ENCODE measurements at regions of chr2 and their contacts with region 1.

Region 1: GRCh38 chr2:26088032-26088643 is 54.3 kb downstream of the RAB10 start:
- DNase-seq: peak; percentile 56
- ATAC-seq: no peak
- H3K4me3 ChIP-seq: no peak overlapping the region
- H3K27ac ChIP-seq: no peak overlapping the region
- H3K4me1 ChIP-seq: peaks cover 21% of the 10 kb centered on the region
- H3K27me3 ChIP-seq: no peaks in the 10 kb centered on the region
- CTCF ChIP-seq: peak; percentile 89

Region 2: GRCh38 chr2:25528173-25528572 is 560.0 kb before region 1 on chr2:
- CTCF ChIA-PET with region 1: no interaction called
- POLR2A ChIA-PET with region 1: no interaction called
- intact Hi-C with region 1: no loop called
- DNase-seq: peak; percentile 69
- ATAC-seq: peak; percentile 90
- H3K4me3 ChIP-seq: no peak overlapping the region
- H3K27ac ChIP-seq: no peak overlapping the region
- H3K4me1 ChIP-seq: peaks cover 15% of the 10 kb centered on the region
- H3K27me3 ChIP-seq: no peaks in the 10 kb centered on the region
- CTCF ChIP-seq: no peak

Region 3: GRCh38 chr2:25844089-25844488 is 244.0 kb before region 1 on chr2:
- CTCF ChIA-PET with region 1: no interaction called
- POLR2A ChIA-PET with region 1: no interaction called
- intact Hi-C with region 1: no loop called
- DNase-seq: peak; percentile 9
- ATAC-seq: no peak; the same call in 1 of the 2 replicates
- H3K4me3 ChIP-seq: no peak overlapping the region
- H3K27ac ChIP-seq: no peak overlapping the region
- H3K4me1 ChIP-seq: peaks cover 6% of the 10 kb centered on the region
- H3K27me3 ChIP-seq: no peaks in the 10 kb centered on the region
- CTCF ChIP-seq: no peak

Region 4: DNA sequence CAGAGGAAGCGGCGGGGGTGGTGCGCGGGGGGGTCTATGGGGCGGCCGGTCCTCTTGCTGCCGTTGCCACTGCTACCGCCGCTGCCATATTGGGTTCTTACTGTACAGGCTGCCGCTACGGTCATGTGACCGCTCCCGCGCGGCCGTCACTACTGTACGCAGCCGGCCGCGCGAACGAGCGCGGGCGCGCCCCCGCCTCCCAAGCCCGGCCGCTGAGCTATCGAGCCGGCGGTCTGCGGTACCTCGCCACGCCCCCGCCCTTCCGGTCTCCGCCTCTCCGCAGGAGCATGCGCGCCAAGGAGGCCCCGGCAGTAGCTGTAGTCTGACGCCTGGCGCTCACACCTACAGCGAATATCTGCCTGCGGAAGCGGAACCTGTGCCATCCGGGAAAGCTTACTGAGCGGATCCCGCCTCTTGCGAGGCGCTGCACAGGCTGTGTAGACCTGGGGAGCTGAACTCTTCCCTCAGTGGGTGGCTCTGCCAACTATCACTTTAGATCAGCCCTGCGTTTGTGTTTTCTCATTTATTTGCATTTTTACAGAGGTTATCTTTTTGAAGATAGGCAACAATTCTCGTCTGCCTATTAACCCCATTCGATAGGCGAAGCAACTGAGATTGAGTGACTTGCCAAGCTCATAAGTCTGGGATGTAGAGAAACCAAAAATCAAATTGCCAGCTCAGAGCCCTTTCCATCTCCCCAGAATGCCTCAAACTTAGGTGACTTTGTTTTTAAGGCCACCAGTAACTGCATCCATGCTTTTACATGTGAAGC is 209.6 kb before region 1 on chr2 and contains the start of gene ASXL2:
- CTCF ChIA-PET with region 1: no interaction called
- POLR2A ChIA-PET with region 1: no interaction called
- intact Hi-C with region 1: loop called (anchors 10 kb)
- DNase-seq: peak; percentile 98
- ATAC-seq: peak; percentile 85
- H3K4me3 ChIP-seq: peak within 1 kb of the TSS; percentile 94
- H3K27ac ChIP-seq: peak within 1 kb of the TSS; percentile 79
- H3K4me1 ChIP-seq: peaks cover 25% of the 10 kb centered on the region
- H3K27me3 ChIP-seq: no peaks in the 10 kb centered on the region
- CTCF ChIP-seq: no peak
- total RNA-seq, gene ASXL2: 11.5 and 18.7 TPM in 2 replicates

Region 5: GRCh38 chr2:25991965-25992364 is 96.2 kb before region 1 on chr2:
- CTCF ChIA-PET with region 1: interaction called, 4 read pairs
- POLR2A ChIA-PET with region 1: no interaction called
- intact Hi-C with region 1: loop called (anchors 2 kb)
- DNase-seq: no peak
- ATAC-seq: peak; percentile 35
- H3K4me3 ChIP-seq: peak overlapping the region; percentile 51; the same call in 1 of the 2 replicates
- H3K27ac ChIP-seq: no peak overlapping the region
- H3K4me1 ChIP-seq: peaks cover 6% of the 10 kb centered on the region
- H3K27me3 ChIP-seq: no peaks in the 10 kb centered on the region
- CTCF ChIP-seq: no peak

Region 6: GRCh38 chr2:26126074-26126473 is 37.9 kb after region 1 on chr2:
- CTCF ChIA-PET with region 1: no interaction called
- POLR2A ChIA-PET with region 1: interaction called, 4 read pairs
- intact Hi-C with region 1: loop called (anchors 5 kb)
- DNase-seq: no peak
- ATAC-seq: no peak
- H3K4me3 ChIP-seq: no peak overlapping the region
- H3K27ac ChIP-seq: no peak overlapping the region
- H3K4me1 ChIP-seq: no peaks in the 10 kb centered on the region
- H3K27me3 ChIP-seq: no peaks in the 10 kb centered on the region
- CTCF ChIP-seq: no peak

Region 7: GRCh38 chr2:26330113-26330549 is 242.0 kb after region 1 on chr2:
- CTCF ChIA-PET with region 1: no interaction called
- POLR2A ChIA-PET with region 1: no interaction called
- intact Hi-C with region 1: loop called (anchors 1 kb)
- DNase-seq: peak; percentile 86
- ATAC-seq: peak; percentile 99
- H3K4me3 ChIP-seq: no peak overlapping the region
- H3K27ac ChIP-seq: no peak overlapping the region
- H3K4me1 ChIP-seq: no peaks in the 10 kb centered on the region; the same call in 1 of the 2 replicates
- H3K27me3 ChIP-seq: no peaks in the 10 kb centered on the region
- CTCF ChIP-seq: peak; percentile 95

Region 8: DNA sequence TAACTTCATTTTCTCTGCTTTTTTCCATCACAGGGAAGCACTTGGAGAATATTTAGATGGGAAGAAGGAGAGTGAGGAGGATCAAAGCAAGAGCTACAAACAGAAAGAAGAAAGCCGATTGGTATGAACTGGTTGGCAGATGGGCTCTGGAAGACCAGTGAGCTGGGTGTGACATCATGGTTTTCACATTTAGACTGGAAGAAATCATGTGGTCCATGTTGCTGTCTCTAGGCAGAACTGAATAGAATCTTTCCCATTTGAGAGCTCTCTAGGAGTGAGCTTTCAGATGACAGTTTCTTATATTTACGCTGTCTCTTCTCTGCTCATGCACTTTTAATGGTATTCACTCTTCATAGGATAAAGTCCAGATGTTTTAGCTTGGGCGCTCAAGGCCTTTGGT is 326.2 kb after region 1 on chr2:
- CTCF ChIA-PET with region 1: no interaction called
- POLR2A ChIA-PET with region 1: no interaction called
- intact Hi-C with region 1: no loop called
- DNase-seq: no peak
- ATAC-seq: no peak
- H3K4me3 ChIP-seq: no peak overlapping the region
- H3K27ac ChIP-seq: no peak overlapping the region
- H3K4me1 ChIP-seq: no peaks in the 10 kb centered on the region
- H3K27me3 ChIP-seq: no peaks in the 10 kb centered on the region
- CTCF ChIP-seq: no peak

Measured in PC-3 (cell line).